Aorta (tissue), 5 donors: ENCODE measurements at regions of chr10 and their contacts with region 1.

Region 1: GRCh38 chr10:124916585-124917427 is 25.1 kb upstream of the ZRANB1 start:
- DNase-seq: peak; percentile 99 to 100
- ATAC-seq: peak; percentile 99
- H3K4me3 ChIP-seq: peak overlapping the region; percentile 92 to 94
- H3K27ac ChIP-seq: peak overlapping the region; percentile 90 to 99
- H3K4me1 ChIP-seq: peaks cover 2 to 7% of the 10 kb centered on the region in 2 donors
- H3K27me3 ChIP-seq: no peaks in the 10 kb centered on the region

Region 2: DNA sequence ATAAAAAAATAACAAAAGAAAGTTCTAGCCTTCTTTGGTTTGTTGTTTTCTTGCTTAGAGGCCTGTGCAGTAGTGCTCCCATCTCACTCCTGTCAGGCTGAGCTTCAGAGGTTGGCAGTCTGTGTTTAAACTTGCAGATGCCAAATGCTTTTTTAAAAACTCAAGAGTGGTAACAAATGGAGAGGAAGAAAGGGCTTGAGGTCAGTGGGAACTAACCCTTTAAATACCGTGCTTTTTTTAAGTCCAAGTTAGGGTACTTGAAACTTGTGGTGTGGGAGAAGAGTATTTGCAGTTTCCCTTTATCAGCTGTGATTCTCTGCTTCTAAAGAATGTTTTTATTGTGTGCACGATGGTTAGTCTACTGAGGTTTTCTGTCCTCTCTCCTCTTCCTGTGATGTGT is 54.5 kb after region 1 on chr10:
- intact Hi-C with region 1: loop called in 1 of 2 experiments (anchors 2 kb)
- DNase-seq: no peak
- ATAC-seq: no peak
- H3K4me3 ChIP-seq: no peak overlapping the region
- H3K27ac ChIP-seq: peak overlapping the region in 1 of 2 donors; percentile 11
- H3K4me1 ChIP-seq: peaks cover 0 to 4% of the 10 kb centered on the region in 2 donors
- H3K27me3 ChIP-seq: no peaks in the 10 kb centered on the region

Region 3: GRCh38 chr10:125859128-125859817 is 942.5 kb after region 1 on chr10:
- intact Hi-C with region 1: no loop called
- DNase-seq: no peak
- ATAC-seq: no peak
- H3K4me3 ChIP-seq: no peak overlapping the region
- H3K27ac ChIP-seq: no peak overlapping the region
- H3K4me1 ChIP-seq: no peaks in the 10 kb centered on the region
- H3K27me3 ChIP-seq: no peaks in the 10 kb centered on the region